Activated naive CD4-positive, alpha-beta T cell treated with anti-CD3 and anti-CD28 coated beads for 36 hours (primary cell): ENCODE measurements at regions of chr17 and their contacts with region 1.

Region 1: DNA sequence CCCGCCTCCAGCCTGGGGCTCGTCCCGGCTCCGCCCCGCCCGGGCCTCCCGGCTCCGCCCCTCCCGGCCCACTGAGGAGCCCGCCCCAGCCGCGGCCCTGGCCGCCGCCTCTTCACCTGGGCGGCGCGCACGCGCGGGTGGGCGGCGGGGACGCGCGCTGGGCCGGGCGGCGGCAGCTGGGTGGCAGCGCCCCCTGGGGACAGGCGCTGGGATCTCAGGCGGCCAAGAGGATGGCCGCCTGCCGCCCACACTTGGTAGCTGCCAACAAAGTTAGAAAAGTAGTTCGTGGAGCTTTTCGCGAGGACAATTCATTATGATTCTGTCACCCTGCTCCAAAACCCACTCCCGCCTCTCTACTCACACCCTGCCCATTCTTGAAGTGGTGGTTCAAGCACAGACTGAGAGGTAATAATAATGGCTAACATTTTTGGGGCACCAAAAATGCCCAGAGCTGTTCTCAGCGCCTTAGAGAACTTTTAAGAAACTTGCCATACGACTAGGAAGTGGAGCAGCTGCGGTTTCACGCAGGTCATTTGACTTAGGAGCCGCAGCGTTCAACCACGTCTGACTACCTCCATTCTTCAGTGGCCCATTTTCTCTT is 340 bp upstream of the MYO1D start:
- DNase-seq: peak; percentile 92
- H3K4me3 Mint-ChIP-seq: peak overlapping the region; percentile 54
- H3K27ac Mint-ChIP-seq: peak overlapping the region; percentile 48
- H3K4me1 Mint-ChIP-seq: peaks cover 15% of the 10 kb centered on the region
- H3K27me3 Mint-ChIP-seq: no peaks in the 10 kb centered on the region

Region 2: GRCh38 chr17:32283745-32284201 is 593.5 kb before region 1 on chr17:
- CTCF ChIA-PET with region 1: no interaction called
- intact Hi-C with region 1: no loop called
- DNase-seq: no peak
- H3K4me3 Mint-ChIP-seq: no peak overlapping the region
- H3K27ac Mint-ChIP-seq: no peak overlapping the region
- H3K4me1 Mint-ChIP-seq: no peaks in the 10 kb centered on the region
- H3K27me3 Mint-ChIP-seq: peaks cover 5% of the 10 kb centered on the region

Region 3: DNA sequence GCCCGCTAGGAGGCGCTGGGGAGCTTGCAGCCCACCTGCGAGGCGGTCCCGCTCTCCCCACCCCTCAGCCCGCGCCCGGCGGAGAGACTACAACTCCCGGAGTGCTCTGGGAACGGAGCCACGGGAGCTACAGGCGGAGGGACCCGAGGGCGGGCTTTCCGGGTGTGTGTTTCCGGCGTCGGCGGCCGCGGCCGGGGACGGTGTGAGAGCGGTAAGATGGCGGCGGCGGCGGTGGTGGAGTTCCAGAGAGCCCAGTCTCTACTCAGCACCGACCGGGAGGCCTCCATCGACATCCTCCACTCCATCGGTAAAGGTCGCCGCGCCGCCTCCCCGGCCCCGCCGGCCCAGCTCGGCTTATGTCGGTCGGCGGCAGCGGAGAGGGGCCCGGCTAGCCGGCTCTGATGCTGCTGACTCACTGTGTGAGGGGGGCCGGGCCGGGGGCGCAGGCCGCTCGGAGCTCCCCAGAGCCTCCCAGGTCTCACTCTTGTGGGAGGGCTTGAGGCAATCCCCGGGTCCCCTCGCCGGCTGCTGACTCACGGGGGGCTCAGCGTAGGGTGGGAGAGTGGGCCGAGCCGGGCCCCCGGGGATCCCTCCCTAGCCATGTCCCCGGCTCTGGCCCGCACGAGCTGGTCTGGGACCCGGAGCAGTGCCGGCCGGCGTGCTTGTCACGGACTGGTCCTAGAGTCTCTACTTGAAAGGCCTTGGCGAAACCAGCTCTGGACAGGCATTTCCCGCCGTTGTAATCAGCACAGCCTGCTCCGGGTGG is 432.8 kb before region 1 on chr17 and contains the start of gene PSMD11:
- CTCF ChIA-PET with region 1: interaction called, 3 read pairs
- intact Hi-C with region 1: loop called (anchors 2 kb)
- DNase-seq: peak; percentile 98
- H3K4me3 Mint-ChIP-seq: peak within 1 kb of the TSS; percentile 93
- H3K27ac Mint-ChIP-seq: peak within 1 kb of the TSS; percentile 89
- H3K4me1 Mint-ChIP-seq: peaks cover 25% of the 10 kb centered on the region
- H3K27me3 Mint-ChIP-seq: peaks cover 5% of the 10 kb centered on the region
- total RNA-seq, gene PSMD11: 132 to 145 TPM

Region 4: GRCh38 chr17:32519228-32520103 is 357.8 kb before region 1 on chr17:
- CTCF ChIA-PET with region 1: interaction called, 3 read pairs
- intact Hi-C with region 1: loop called (anchors 2 kb)
- DNase-seq: peak; percentile 85
- H3K4me3 Mint-ChIP-seq: peak overlapping the region; percentile 73
- H3K27ac Mint-ChIP-seq: peak overlapping the region; percentile 92
- H3K4me1 Mint-ChIP-seq: peaks cover 88% of the 10 kb centered on the region
- H3K27me3 Mint-ChIP-seq: no peaks in the 10 kb centered on the region

Region 5: GRCh38 chr17:32794533-32795246 is 82.6 kb before region 1 on chr17:
- CTCF ChIA-PET with region 1: interaction called, 11 read pairs
- intact Hi-C with region 1: no loop called
- DNase-seq: no peak
- H3K4me3 Mint-ChIP-seq: no peak overlapping the region
- H3K27ac Mint-ChIP-seq: no peak overlapping the region
- H3K4me1 Mint-ChIP-seq: no peaks in the 10 kb centered on the region
- H3K27me3 Mint-ChIP-seq: peaks cover 3% of the 10 kb centered on the region

Region 6: GRCh38 chr17:32819035-32819434 is 58.2 kb before region 1 on chr17:
- CTCF ChIA-PET with region 1: no interaction called
- intact Hi-C with region 1: no loop called
- DNase-seq: no peak
- H3K4me3 Mint-ChIP-seq: no peak overlapping the region
- H3K27ac Mint-ChIP-seq: no peak overlapping the region
- H3K4me1 Mint-ChIP-seq: peaks cover 8% of the 10 kb centered on the region
- H3K27me3 Mint-ChIP-seq: peaks cover 12% of the 10 kb centered on the region

Region 7: GRCh38 chr17:32909787-32910369 is 32.6 kb after region 1 on chr17:
- CTCF ChIA-PET with region 1: interaction called, 4 read pairs
- intact Hi-C with region 1: loop called (anchors 2 kb)
- DNase-seq: peak; percentile 76
- H3K4me3 Mint-ChIP-seq: no peak overlapping the region
- H3K27ac Mint-ChIP-seq: no peak overlapping the region
- H3K4me1 Mint-ChIP-seq: no peaks in the 10 kb centered on the region
- H3K27me3 Mint-ChIP-seq: peaks cover 7% of the 10 kb centered on the region